CD14-positive monocyte (primary cell): ENCODE measurements at regions of chr11 and their contacts with region 1.

Region 1: GRCh38 chr11:15650105-15650938 is 535.6 kb downstream of the INSC start:
- DNase-seq: peak; percentile 70 to 77 (median 76)
- H3K4me3 ChIP-seq: peak overlapping the region in 2 of 3 experiments; percentile 4 to 63
- H3K4me3 Mint-ChIP-seq: peak overlapping the region; percentile 56 to 81
- H3K27ac ChIP-seq: no peak overlapping the region
- H3K27ac Mint-ChIP-seq: peak overlapping the region in 2 of 7 donors; percentile 25 to 31
- H3K4me1 ChIP-seq: peaks cover 9 to 10% of the 10 kb centered on the region in 2 donors
- H3K4me1 Mint-ChIP-seq: peaks cover 5% of the 10 kb centered on the region
- H3K27me3 ChIP-seq: peaks cover 17 to 30% of the 10 kb centered on the region in 2 donors
- H3K27me3 Mint-ChIP-seq: peaks cover 31 to 39% (median 37%) of the 10 kb centered on the region in 3 donors
- CTCF ChIP-seq: peak; percentile 95

Region 2: DNA sequence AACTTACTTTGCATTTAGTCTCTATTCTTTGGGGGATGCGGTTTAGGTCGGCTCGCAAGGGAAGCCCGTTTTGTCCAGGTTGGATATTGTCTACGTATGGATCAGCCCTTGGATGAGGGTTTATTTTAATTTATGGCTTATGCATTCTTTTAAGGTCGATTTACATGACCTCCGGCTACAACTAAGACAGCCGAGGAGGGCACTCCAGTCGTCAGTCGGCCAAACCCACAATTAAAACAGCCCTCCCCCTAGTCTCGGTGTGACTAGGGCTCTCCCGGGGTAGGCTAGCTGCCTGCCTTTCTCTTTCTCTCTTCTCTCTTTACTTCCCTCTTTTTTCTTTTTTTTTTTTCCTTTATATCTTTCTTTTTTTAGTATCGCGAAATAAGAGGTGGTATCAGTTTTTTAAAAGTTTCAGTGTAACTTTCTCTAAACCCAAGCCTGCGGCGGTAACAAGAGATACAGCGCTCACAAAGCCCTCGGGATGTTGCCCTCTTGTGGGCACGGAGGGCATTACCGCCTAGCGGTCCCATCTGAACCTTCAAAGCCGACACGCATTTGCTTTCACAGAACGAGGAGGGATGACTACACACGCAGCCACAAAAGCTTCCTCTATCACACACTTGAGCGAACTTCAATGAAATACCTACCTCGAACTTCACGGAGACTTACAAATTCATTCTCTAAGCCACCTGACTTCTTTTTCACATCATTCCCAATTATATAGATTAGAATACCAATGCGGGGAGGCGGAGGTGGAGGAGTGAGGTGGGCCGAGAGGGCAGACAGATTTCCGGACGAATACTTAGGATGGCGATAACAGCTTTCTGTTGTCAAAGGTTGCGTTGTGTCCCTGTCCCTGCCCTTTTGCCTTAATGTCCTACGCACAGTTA is 955.8 kb after region 1 on chr11:
- intact Hi-C with region 1: loop called (anchors 5 kb)
- DNase-seq: peak; percentile 73 to 78 (median 73)
- H3K4me3 ChIP-seq: peak overlapping the region in 1 of 3 experiments; percentile 55
- H3K4me3 Mint-ChIP-seq: peak overlapping the region in 1 of 2 donors; percentile 70
- H3K27ac ChIP-seq: no peak overlapping the region
- H3K27ac Mint-ChIP-seq: peak overlapping the region in 1 of 7 donors; percentile 19
- H3K4me1 ChIP-seq: peaks cover 26 to 36% of the 10 kb centered on the region in 2 donors
- H3K4me1 Mint-ChIP-seq: peaks cover 28% of the 10 kb centered on the region
- H3K27me3 ChIP-seq: peaks cover 86 to 99% of the 10 kb centered on the region in 2 donors
- H3K27me3 Mint-ChIP-seq: peaks cover 31 to 48% (median 33%) of the 10 kb centered on the region in 3 donors
- CTCF ChIP-seq: peak; percentile 96

Region 3: DNA sequence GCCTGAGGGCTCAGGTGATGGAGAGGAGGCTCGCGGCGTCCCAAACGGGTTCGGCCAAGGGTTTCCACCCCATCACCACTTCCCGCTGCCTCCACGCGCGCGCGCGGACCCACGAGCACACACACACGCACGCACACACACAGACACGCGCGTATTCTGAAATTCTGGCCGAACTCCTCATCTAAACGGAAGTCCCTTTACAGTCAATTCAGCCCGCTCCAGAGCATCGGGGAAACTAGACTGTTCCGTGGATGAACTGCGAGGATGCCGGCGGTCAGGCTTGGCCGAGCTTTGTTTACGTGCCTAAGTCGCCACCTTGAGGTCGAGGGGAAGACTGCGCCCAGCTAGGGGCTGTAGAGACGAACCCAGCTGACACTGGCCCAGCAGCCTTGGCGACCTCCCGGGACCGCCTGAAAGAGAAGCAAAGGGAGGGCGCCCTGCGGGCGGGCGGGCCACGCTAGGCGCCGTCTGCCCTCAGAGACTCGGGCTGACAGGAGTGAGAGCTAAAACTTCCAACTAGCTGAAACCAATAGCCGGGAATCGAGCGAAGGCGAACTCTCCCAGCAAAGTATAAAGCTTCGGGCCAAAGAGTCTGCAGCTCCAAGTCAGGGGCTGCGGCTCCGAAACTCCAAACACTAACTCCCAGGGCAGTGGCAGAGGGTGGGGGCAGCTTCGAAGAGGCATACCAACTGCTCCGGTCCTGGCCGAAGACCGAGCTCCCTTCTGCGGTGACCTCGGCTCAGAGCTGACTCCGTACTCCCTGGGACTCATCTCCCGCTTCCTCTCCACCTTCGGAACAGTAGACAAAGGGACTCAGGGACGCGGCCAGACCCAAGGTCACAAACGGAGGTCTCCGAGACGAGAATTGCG is 963.4 kb after region 1 on chr11:
- intact Hi-C with region 1: loop called (anchors 5 kb)
- DNase-seq: peak; percentile 32 to 62 (median 46)
- H3K4me3 ChIP-seq: peak overlapping the region in 1 of 3 experiments; percentile 54
- H3K4me3 Mint-ChIP-seq: peak overlapping the region; percentile 69 to 91
- H3K27ac ChIP-seq: no peak overlapping the region
- H3K27ac Mint-ChIP-seq: no peak overlapping the region
- H3K4me1 ChIP-seq: peaks cover 11% of the 10 kb centered on the region in 2 donors
- H3K4me1 Mint-ChIP-seq: peaks cover 19% of the 10 kb centered on the region
- H3K27me3 ChIP-seq: peaks cover 79 to 92% of the 10 kb centered on the region in 2 donors
- H3K27me3 Mint-ChIP-seq: peaks cover 8 to 26% (median 24%) of the 10 kb centered on the region in 3 donors
- CTCF ChIP-seq: peak; percentile 77